Heart left ventricle (tissue), 16 donors: ENCODE measurements at regions of chr6 and their contacts with region 1.

Region 1: DNA sequence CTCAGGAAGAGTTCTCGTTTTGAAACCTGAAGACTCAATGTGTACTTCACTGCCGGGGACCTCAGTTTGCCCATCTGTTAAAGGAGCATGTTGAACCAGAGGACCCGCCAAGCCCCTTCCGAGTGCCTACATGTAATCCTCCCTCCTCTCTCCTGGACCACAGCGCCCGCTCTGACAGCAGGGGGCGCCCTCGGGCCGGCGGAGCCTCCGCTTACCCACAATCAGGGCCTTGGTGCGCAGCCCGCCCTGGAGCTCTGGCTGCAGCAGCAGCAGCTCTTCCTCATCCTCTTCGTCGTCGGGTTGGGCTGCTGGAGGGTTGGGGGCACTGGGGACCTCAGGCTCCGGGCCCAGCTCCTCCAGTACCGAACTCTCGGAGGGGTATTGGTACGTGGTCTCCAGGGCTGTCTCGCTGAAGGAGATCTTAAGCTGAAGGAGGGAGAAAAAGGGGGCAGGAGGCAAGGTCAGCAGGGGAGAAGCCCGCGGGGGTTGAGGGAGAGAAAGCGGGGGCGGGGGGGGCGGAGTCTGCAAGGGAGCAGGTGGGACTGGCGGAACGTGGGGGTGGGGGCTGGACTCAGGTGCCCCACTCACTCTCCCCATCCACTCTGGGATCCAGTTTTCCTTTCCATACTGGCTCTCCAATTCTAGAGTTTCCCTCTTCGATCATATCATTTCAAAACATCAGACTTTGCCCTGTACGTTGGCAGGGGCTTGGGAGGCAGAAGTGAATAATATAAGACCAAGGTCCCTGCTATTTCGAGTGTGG is 6.3 kb upstream of the DHX16 start:
- DNase-seq: peak; percentile 87 to 95 (median 89)
- ATAC-seq: peak; percentile 68 to 77 (median 73)
- H3K4me3 ChIP-seq: peak overlapping the region in 7 of 12 donors; percentile 0 to 94 (median 18)
- H3K27ac ChIP-seq: peak overlapping the region in 5 of 12 donors; percentile 29 to 100 (median 56)
- H3K4me1 ChIP-seq: peaks cover 0 to 55% (median 44%) of the 10 kb centered on the region in 12 donors
- H3K27me3 ChIP-seq: no peaks in the 10 kb centered on the region
- CTCF ChIP-seq: peak; percentile 92 to 98 (median 96)
- POLR2A ChIP-seq: no peak

Region 2: DNA sequence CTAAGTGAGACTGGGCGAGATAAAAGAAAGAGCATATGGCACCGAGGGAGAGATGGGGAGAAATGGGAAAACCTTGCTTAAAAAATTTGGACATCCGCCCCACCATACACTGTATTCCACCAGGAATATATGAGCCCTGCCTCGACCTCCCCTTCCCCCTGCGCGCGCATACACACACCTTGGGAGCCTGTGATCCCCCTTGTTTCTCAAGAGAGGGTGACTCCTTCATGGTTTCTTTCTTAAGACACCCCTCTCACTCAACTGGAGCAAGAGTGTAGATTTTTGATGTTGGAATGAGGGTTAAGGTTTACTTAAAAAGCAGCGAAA is 107.4 kb before region 1 on chr6:
- intact Hi-C with region 1: no loop called
- DNase-seq: no peak
- ATAC-seq: no peak
- H3K4me3 ChIP-seq: peak overlapping the region; percentile 27 to 95 (median 73)
- H3K27ac ChIP-seq: peak overlapping the region in 11 of 12 donors; percentile 80 to 97 (median 88)
- H3K4me1 ChIP-seq: peaks cover 0 to 40% (median 28%) of the 10 kb centered on the region in 12 donors
- H3K27me3 ChIP-seq: no peaks in the 10 kb centered on the region
- CTCF ChIP-seq: no peak
- POLR2A ChIP-seq: no peak

Region 3: DNA sequence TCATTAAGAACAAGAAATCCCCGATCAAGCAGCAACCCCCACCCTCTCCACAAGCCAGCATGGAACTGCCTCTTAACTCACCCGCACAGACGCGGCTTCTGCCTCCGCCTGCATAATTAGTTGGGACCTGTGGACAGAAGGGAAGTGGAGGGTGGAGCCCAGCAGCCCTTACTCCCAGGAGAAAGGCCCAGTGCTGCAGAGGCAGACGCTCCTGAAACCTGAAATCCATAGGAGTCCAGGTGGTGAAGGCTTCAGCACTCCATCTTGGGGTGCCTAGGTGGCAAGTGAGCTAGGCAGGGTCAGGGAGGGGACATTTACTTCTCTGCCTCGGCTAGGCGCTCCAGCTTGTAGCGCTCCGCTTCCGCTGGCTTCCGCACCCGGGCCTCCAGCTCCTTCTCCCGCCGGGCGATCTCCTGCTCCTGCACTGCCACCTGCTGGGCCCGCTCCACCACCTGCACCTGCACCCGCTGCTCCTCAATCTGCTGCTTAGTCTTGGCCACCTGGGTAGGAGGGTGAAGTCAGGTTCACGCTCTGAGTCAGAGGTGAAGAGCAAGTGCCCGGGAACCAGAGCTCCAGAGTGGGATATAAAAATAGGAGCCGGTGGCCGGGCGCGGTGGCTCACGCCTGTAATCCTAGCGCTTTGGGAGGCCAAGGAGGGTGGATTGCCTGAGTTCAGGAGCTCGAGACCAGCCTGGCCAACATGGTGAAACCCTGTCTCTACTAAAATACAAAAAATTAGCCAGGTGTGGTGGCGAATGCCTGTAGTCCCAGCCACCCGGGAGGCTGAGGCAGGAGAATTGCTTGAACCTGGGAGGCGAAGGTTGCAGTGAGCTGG is 51.7 kb after region 1 on chr6:
- intact Hi-C with region 1: loop called in 1 of 10 experiments (anchors 2 kb)
- DNase-seq: peak; percentile 65 to 82 (median 71)
- ATAC-seq: peak; percentile 58 to 85 (median 75)
- H3K4me3 ChIP-seq: peak overlapping the region in 1 of 12 donors; percentile 30
- H3K27ac ChIP-seq: peak overlapping the region in 5 of 12 donors; percentile 15 to 64 (median 29)
- H3K4me1 ChIP-seq: peaks cover 0 to 25% (median 12%) of the 10 kb centered on the region in 12 donors
- H3K27me3 ChIP-seq: no peaks in the 10 kb centered on the region
- CTCF ChIP-seq: peak; percentile 50 to 75 (median 60)
- POLR2A ChIP-seq: no peak

Region 4: GRCh38 chr6:30793521-30794194 is 114.5 kb after region 1 on chr6:
- intact Hi-C with region 1: no loop called
- DNase-seq: no peak
- ATAC-seq: peak in 3 of 4 donors; percentile 50 to 71 (median 58)
- H3K4me3 ChIP-seq: peak overlapping the region in 1 of 12 donors; percentile 13
- H3K27ac ChIP-seq: peak overlapping the region; percentile 59 to 96 (median 71)
- H3K4me1 ChIP-seq: peaks cover 0 to 34% (median 3%) of the 10 kb centered on the region in 12 donors
- H3K27me3 ChIP-seq: no peaks in the 10 kb centered on the region
- CTCF ChIP-seq: no peak
- POLR2A ChIP-seq: no peak

Region 5: GRCh38 chr6:30821862-30822782 is 143.0 kb after region 1 on chr6:
- intact Hi-C with region 1: loop called in 1 of 10 experiments (anchors 5 kb)
- DNase-seq: no peak
- ATAC-seq: no peak
- H3K4me3 ChIP-seq: no peak overlapping the region
- H3K27ac ChIP-seq: peak overlapping the region in 6 of 12 donors; percentile 34 to 64 (median 46)
- H3K4me1 ChIP-seq: peaks cover 0 to 68% (median 21%) of the 10 kb centered on the region in 12 donors
- H3K27me3 ChIP-seq: no peaks in the 10 kb centered on the region
- CTCF ChIP-seq: peak; percentile 29 to 64 (median 47)
- POLR2A ChIP-seq: no peak

Region 6: DNA sequence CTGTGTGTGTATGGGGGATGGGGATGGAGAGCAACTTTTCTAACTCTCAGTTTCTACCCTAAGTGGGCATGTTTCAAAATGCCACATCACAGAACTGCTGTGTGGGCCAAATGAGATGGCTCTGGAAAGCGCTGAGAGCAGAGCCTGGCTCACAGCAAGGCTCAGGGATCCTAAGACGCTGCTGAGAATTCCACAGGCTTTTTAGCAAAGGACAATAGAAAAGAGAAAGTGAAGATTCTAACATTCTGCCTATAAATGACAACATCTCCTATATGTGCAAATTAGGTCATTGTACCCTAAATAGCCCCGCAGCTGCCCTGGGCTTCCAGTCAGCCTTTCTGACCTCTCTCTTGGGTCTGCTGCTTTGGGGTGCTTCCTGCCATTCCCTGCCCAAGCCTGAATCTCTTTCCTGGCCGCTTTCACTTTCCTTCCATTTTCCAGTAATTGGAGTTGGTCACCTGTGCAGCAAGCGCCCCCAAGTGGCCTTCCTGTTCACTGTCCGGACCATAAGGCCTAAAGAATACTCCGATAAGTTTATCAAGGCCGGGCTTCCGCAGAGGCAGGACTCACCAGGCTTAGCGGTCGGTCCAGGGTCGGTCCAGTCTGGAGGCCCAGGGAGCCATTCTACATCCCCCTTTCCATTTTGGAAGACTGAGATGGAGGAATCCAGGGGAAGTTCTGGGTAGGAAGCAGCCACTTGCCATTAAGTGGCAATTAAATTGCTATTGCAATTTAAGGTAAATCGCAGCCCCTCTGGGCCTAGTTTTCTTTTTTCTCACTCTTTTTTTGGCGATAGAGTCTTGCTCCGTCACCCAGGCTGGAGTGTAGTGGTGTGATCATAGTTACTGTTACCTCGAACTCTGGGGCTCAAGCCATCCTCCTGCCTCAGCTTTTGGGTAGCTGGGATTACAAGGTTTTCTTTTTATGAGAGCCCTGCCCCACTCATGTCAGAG is 198.6 kb after region 1 on chr6:
- intact Hi-C with region 1: loop called in 8 of 10 experiments (anchors 1 to 10 kb)
- DNase-seq: peak; percentile 88 to 92 (median 89)
- ATAC-seq: peak; percentile 87 to 93 (median 90)
- H3K4me3 ChIP-seq: peak overlapping the region in 11 of 12 donors; percentile 14 to 56 (median 40)
- H3K27ac ChIP-seq: peak overlapping the region; percentile 22 to 85 (median 62)
- H3K4me1 ChIP-seq: peaks cover 0 to 32% (median 13%) of the 10 kb centered on the region in 12 donors
- H3K27me3 ChIP-seq: no peaks in the 10 kb centered on the region
- CTCF ChIP-seq: peak; percentile 77 to 95 (median 90)
- POLR2A ChIP-seq: no peak

Region 7: DNA sequence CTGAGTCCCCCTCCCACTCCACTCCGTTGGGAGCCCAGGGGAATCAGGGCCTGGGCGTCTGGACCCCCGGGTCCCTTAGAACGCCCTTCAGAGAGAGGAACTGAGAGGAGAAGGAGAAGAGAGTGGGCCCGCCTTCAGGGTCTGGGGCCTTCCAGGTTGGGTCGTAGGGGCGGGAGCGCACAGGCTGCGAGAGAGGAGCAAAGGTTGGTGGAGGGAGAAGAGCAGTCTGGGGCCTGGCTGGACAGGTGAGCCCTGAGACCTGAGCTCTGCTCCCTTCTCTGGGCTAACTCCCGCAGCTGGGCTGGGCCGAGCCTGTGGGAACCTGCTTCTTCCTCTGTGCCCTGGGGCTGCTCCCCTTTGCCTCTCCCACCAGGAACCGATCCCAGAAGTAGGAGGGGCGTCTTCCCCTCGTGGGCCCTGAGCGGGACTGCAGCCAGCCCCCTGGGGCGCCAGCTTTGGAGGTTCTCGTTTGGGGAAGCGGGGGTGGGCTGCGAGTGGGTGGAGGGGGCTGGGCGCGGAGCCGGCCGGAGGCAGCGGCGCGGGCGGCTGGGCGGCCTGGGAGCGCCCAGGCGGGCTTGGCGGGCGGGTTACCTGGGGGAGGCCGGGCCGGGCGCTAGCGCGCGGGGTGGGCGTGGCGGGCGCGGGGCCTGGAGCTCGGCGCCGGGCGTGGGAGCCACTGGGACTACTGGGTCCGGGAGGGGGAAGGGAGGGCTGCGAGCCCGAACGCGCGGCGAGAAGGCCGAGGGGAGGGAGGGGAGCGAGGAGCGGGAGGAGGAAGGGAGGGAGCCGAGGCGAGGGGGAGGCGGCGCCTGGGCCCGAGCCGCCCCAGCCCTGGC is 204.8 kb after region 1 on chr6 and contains the start of gene DDR1:
- intact Hi-C with region 1: loop called in 6 of 10 experiments (anchors 5 to 10 kb)
- DNase-seq: peak; percentile 79 to 87 (median 84)
- ATAC-seq: peak; percentile 7 to 76 (median 70)
- H3K4me3 ChIP-seq: peak within 1 kb of the TSS; percentile 37 to 93 (median 74)
- H3K27ac ChIP-seq: peak within 1 kb of the TSS; percentile 11 to 88 (median 80)
- H3K4me1 ChIP-seq: peaks cover 9 to 54% (median 34%) of the 10 kb centered on the region in 12 donors
- H3K27me3 ChIP-seq: peaks cover 0 to 3% (median 0%) of the 10 kb centered on the region in 9 donors
- CTCF ChIP-seq: no peak
- POLR2A ChIP-seq: no peak
- total RNA-seq, gene DDR1: 18.0 to 50.0 (median 38.4) TPM

Region 8: GRCh38 chr6:31079656-31080261 is 400.6 kb after region 1 on chr6:
- intact Hi-C with region 1: loop called in 3 of 10 experiments (anchors 5 to 10 kb)
- DNase-seq: peak in 4 of 5 donors; percentile 42 to 59 (median 52)
- ATAC-seq: peak in 3 of 4 donors; percentile 66 to 75 (median 69)
- H3K4me3 ChIP-seq: peak overlapping the region in 9 of 12 donors; percentile 13 to 49 (median 29)
- H3K27ac ChIP-seq: no peak overlapping the region
- H3K4me1 ChIP-seq: peaks cover 0 to 19% (median 4%) of the 10 kb centered on the region in 12 donors
- H3K27me3 ChIP-seq: no peaks in the 10 kb centered on the region
- CTCF ChIP-seq: peak; percentile 63 to 92 (median 78)
- POLR2A ChIP-seq: no peak